ENCODE measurements at regions of chr3 and their contacts with region 1.

Region 1: DNA sequence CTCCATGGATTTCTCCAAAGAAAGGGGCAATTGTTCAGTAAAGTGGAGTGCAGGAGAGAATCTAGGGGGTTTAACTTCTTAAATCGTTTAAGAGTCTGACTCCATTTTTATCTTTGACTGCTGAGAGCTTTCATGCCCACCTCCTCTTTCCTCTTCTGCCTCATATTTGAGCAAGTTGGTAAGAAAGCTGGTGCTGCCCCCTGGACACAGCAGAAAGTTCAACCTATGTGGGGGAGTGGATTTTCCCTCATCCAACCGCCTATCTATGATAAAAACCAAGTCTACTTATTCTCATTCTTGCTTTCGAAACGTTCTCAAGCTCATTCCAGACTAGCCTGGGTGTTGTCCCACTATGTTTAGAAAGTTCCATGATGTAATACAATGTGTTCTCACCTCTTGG is 26.0 kb downstream of the HHLA2 start:
- DNase-seq: no peak
- H3K4me3 ChIP-seq: no peak overlapping the region
- H3K4me3 Mint-ChIP-seq: no peak overlapping the region
- H3K27ac Mint-ChIP-seq: no peak overlapping the region
- H3K4me1 ChIP-seq: peaks cover 14% of the 10 kb centered on the region
- H3K4me1 Mint-ChIP-seq: peaks cover 12% of the 10 kb centered on the region
- H3K27me3 ChIP-seq: no peaks in the 10 kb centered on the region
- H3K27me3 Mint-ChIP-seq: no peaks in the 10 kb centered on the region
- CTCF ChIP-seq: peak in 1 of 2 experiments; percentile 19

Region 2: DNA sequence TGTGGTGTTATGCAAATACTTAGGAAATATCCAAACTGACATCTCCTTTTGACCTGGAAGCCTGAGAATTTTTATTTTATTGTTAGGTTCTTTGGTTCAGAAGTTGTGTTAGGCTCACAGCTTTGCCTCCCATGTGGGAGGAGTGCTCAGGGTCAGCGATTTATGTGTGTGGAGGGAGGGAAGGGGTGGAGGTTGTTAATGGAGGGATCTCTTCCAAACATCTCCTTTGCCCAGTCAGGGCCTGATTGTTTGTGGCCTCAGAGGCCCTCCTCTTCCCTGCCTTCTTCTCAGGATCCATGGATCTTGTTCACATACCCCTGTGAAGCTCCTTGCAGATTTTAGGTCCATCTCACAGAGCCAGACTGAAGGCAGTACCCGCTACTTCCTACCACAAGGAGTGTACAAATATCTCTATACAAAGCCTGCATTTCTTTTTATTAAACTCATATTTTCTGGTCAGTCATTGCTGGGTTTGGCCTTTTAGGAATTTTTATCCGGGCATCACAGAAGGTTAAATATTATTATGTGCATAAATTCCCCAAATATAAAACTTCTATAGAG is 759.3 kb before region 1 on chr3:
- CTCF ChIA-PET with region 1: no interaction called
- POLR2A ChIA-PET with region 1: no interaction called
- intact Hi-C with region 1: no loop called
- DNase-seq: no peak
- H3K4me3 ChIP-seq: no peak overlapping the region
- H3K4me3 Mint-ChIP-seq: no peak overlapping the region
- H3K27ac Mint-ChIP-seq: no peak overlapping the region
- H3K4me1 ChIP-seq: no peaks in the 10 kb centered on the region
- H3K4me1 Mint-ChIP-seq: no peaks in the 10 kb centered on the region
- H3K27me3 ChIP-seq: no peaks in the 10 kb centered on the region
- H3K27me3 Mint-ChIP-seq: peaks cover 17% of the 10 kb centered on the region
- CTCF ChIP-seq: no peak

Region 3: GRCh38 chr3:107897471-107898061 is 424.8 kb before region 1 on chr3:
- CTCF ChIA-PET with region 1: no interaction called
- POLR2A ChIA-PET with region 1: no interaction called
- intact Hi-C with region 1: no loop called
- DNase-seq: no peak
- H3K4me3 ChIP-seq: no peak overlapping the region
- H3K4me3 Mint-ChIP-seq: no peak overlapping the region
- H3K27ac Mint-ChIP-seq: no peak overlapping the region
- H3K4me1 ChIP-seq: no peaks in the 10 kb centered on the region
- H3K4me1 Mint-ChIP-seq: no peaks in the 10 kb centered on the region
- H3K27me3 ChIP-seq: no peaks in the 10 kb centered on the region
- H3K27me3 Mint-ChIP-seq: peaks cover 21% of the 10 kb centered on the region
- CTCF ChIP-seq: no peak

Region 4: GRCh38 chr3:108241146-108241545 is 81.2 kb before region 1 on chr3:
- CTCF ChIA-PET with region 1: no interaction called
- POLR2A ChIA-PET with region 1: no interaction called
- intact Hi-C with region 1: loop called (anchors 5 kb)
- DNase-seq: no peak
- H3K4me3 ChIP-seq: no peak overlapping the region
- H3K4me3 Mint-ChIP-seq: no peak overlapping the region
- H3K27ac Mint-ChIP-seq: peak overlapping the region; percentile 44
- H3K4me1 ChIP-seq: peaks cover 44% of the 10 kb centered on the region
- H3K4me1 Mint-ChIP-seq: peaks cover 9% of the 10 kb centered on the region
- H3K27me3 ChIP-seq: no peaks in the 10 kb centered on the region
- H3K27me3 Mint-ChIP-seq: no peaks in the 10 kb centered on the region
- CTCF ChIP-seq: no peak

Region 5: DNA sequence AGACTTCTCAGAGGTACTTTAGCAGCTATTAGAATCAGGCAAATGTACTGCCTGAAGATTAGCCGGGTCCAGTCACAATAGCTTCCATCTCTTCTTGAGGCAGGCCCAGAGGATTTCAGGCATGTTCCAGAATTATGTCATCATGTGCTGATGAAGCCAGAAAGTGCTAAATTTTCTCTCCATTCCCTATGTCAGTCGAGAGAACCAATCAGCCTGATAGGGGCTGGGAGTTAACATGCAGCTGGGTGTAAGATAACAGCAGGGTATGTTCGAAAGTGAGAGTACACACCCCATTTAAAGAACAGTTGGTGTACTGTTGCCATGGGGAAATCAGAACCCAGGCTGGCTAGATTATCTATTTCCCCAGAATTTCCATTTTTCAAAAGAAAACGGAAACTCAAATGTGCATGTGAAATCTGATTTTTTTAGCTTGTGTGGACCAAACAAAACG is 139.3 kb after region 1 on chr3:
- CTCF ChIA-PET with region 1: no interaction called
- POLR2A ChIA-PET with region 1: no interaction called
- intact Hi-C with region 1: no loop called
- DNase-seq: no peak
- H3K4me3 ChIP-seq: no peak overlapping the region
- H3K4me3 Mint-ChIP-seq: no peak overlapping the region
- H3K27ac Mint-ChIP-seq: no peak overlapping the region
- H3K4me1 ChIP-seq: no peaks in the 10 kb centered on the region
- H3K4me1 Mint-ChIP-seq: no peaks in the 10 kb centered on the region
- H3K27me3 ChIP-seq: no peaks in the 10 kb centered on the region
- H3K27me3 Mint-ChIP-seq: no peaks in the 10 kb centered on the region
- CTCF ChIP-seq: no peak

Measured in Caco-2 (cell line).